ENCODE measurements at regions of chr20 and their contacts with region 1.

Region 1: GRCh38 chr20:41136680-41137613 is at the start of gene PLCG1:
- DNase-seq: peak; percentile 84
- H3K4me3 ChIP-seq: peak within 1 kb of the TSS; percentile 30 to 70 (median 68)
- H3K27ac ChIP-seq: peak within 1 kb of the TSS; percentile 81
- H3K4me1 ChIP-seq: peaks cover 38% of the 10 kb centered on the region
- H3K27me3 ChIP-seq: no peaks in the 10 kb centered on the region
- CTCF ChIP-seq: no peak
- POLR2A ChIP-seq: peak; percentile 70
- total RNA-seq, gene PLCG1: 219 and 224 TPM in 2 replicates

Region 2: GRCh38 chr20:40970201-40970600 is 166.7 kb before region 1 on chr20:
- CTCF ChIA-PET with region 1: interaction called, 3 read pairs
- POLR2A ChIA-PET with region 1: no interaction called
- dilution Hi-C with region 1: no loop called
- intact Hi-C with region 1: loop called (anchors 2 kb)
- DNase-seq: no peak
- H3K4me3 ChIP-seq: no peak overlapping the region
- H3K27ac ChIP-seq: no peak overlapping the region
- H3K4me1 ChIP-seq: no peaks in the 10 kb centered on the region
- H3K27me3 ChIP-seq: no peaks in the 10 kb centered on the region
- CTCF ChIP-seq: peak in 1 of 2 donors; percentile 16
- POLR2A ChIP-seq: no peak

Region 3: DNA sequence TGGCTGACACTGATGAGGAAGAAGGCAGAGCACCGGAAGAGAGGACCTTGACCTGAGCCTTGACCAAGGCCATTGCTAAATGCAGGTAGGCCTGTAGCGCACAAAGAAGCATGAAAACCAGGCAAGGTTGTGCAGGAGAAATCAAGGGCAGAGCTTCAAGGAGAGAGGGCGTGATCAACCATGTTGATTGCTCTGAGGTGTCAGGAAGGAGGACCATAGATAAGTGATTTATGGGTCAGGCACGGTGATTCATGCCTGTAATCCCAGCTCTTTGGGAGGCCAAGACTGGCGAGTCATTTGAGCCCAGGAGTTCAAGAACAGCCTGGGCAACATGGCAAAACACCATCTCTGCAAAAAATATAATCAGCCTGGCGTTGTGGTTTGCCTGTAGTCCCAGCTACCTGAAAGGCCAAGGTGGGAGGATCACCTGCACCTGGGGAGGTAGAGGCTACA is 12.8 kb after region 1 on chr20:
- CTCF ChIA-PET with region 1: interaction called, 55 read pairs
- POLR2A ChIA-PET with region 1: interaction called, 8 read pairs
- dilution Hi-C with region 1: no loop called
- intact Hi-C with region 1: loop called (anchors 1 kb)
- DNase-seq: peak; percentile 40
- H3K4me3 ChIP-seq: no peak overlapping the region
- H3K27ac ChIP-seq: peak overlapping the region; percentile 96
- H3K4me1 ChIP-seq: peaks cover 86% of the 10 kb centered on the region
- H3K27me3 ChIP-seq: no peaks in the 10 kb centered on the region
- CTCF ChIP-seq: no peak
- POLR2A ChIP-seq: no peak

Region 4: GRCh38 chr20:41167481-41168253 is 30.7 kb after region 1 on chr20:
- CTCF ChIA-PET with region 1: interaction called, 61 read pairs
- POLR2A ChIA-PET with region 1: no interaction called
- dilution Hi-C with region 1: no loop called
- intact Hi-C with region 1: loop called (anchors 1 kb)
- DNase-seq: no peak
- H3K4me3 ChIP-seq: no peak overlapping the region
- H3K27ac ChIP-seq: no peak overlapping the region
- H3K4me1 ChIP-seq: peaks cover 3% of the 10 kb centered on the region
- H3K27me3 ChIP-seq: no peaks in the 10 kb centered on the region
- CTCF ChIP-seq: no peak
- POLR2A ChIP-seq: no peak

Region 5: GRCh38 chr20:41249406-41250281 is 112.7 kb after region 1 on chr20:
- CTCF ChIA-PET with region 1: interaction called, 4 read pairs
- POLR2A ChIA-PET with region 1: no interaction called
- dilution Hi-C with region 1: no loop called
- intact Hi-C with region 1: loop called (anchors 2 kb)
- DNase-seq: peak; percentile 92
- H3K4me3 ChIP-seq: peak overlapping the region in 1 of 3 experiments; percentile 63
- H3K27ac ChIP-seq: peak overlapping the region; percentile 99
- H3K4me1 ChIP-seq: peaks cover 67% of the 10 kb centered on the region
- H3K27me3 ChIP-seq: no peaks in the 10 kb centered on the region
- CTCF ChIP-seq: peak in 1 of 2 donors; percentile 34
- POLR2A ChIP-seq: peak; percentile 12

Region 6: DNA sequence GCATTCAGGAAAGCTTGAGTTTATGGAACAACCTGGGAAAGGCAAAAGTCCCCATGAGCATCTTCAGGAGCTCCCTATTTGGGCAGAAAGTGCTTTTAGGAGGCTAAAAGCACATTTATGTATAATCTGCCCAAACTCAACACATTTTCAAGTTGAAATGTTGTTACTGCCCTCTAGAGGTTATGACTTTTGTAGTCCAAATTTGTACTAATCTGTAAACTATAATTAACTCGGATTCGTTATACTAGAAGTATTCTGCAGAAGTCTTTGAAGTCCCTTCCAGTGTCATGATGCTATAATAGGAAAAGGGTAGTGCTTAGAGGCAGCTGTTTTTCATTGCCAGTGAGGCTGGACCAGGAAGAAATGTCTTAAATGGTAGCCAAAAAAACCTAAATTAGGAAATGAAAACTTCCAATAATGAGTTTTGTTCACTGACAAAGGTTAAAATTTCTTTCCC is 274.5 kb after region 1 on chr20:
- CTCF ChIA-PET with region 1: interaction called, 34 read pairs
- POLR2A ChIA-PET with region 1: interaction called, 3 read pairs
- dilution Hi-C with region 1: no loop called
- intact Hi-C with region 1: loop called (anchors 1 kb)
- DNase-seq: peak; percentile 48
- H3K4me3 ChIP-seq: no peak overlapping the region
- H3K27ac ChIP-seq: no peak overlapping the region
- H3K4me1 ChIP-seq: no peaks in the 10 kb centered on the region
- H3K27me3 ChIP-seq: no peaks in the 10 kb centered on the region
- CTCF ChIP-seq: peak; percentile 12 to 19
- POLR2A ChIP-seq: no peak

Region 7: GRCh38 chr20:41693136-41693979 is 556.4 kb after region 1 on chr20:
- CTCF ChIA-PET with region 1: no interaction called
- POLR2A ChIA-PET with region 1: no interaction called
- dilution Hi-C with region 1: no loop called
- intact Hi-C with region 1: loop called (anchors 10 kb)
- DNase-seq: peak; percentile 89
- H3K4me3 ChIP-seq: peak overlapping the region; percentile 57 to 78 (median 67)
- H3K27ac ChIP-seq: no peak overlapping the region
- H3K4me1 ChIP-seq: peaks cover 8% of the 10 kb centered on the region
- H3K27me3 ChIP-seq: no peaks in the 10 kb centered on the region
- CTCF ChIP-seq: peak in 1 of 2 donors; percentile 38
- POLR2A ChIP-seq: no peak